HepG2 (cell line): ENCODE measurements at regions of chr5 and their contacts with region 1.

Region 1: DNA sequence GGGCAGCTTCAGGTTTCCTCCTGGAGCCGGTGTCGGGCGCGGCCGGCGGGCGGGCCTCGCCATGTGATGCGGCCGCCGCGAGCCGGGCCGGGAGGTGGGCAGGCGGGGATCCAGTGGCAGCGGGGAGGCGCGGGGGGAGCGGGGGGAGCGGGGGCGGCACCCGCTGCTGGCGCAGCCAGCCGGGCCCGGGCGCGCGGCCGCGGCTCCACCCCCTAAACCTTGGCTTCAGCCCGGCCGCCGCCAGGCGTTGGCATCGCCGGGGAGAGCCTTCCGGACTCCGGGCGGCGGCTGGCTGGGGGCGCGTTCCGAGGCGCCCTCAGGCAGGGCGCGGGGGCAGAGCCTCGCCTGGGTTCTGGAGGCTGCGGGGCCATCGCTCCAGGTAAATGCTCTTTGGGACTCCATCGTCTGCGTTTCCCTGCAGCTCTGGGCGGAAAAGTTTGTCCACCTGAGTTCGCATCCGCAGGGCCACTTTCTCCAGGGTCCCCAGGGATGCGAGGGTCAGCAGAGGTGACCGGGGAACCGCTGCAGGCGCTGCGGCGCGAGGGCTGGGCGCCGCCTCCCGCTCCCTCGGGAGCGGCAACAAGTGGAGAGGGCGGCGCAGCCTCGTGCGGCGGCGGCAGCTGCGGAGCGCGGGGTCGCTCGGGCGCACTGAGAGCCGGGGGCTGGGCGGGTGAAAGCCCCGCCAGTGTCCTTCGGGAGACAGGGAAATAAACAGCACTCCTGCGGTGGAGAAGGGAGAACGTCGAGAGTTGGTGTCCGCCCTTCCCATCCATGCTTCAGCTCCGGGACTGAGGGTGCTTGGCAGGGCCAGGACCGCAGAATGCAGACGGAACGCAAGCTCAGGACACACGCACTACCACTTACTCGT is at the start of gene ARHGEF28:
- DNase-seq: peak; percentile 49
- ATAC-seq: peak; percentile 78
- H3K4me3 ChIP-seq: peak within 1 kb of the TSS; percentile 79 to 90 (median 80)
- H3K27ac ChIP-seq: peak within 1 kb of the TSS; percentile 81
- H3K4me1 ChIP-seq: peaks cover 77% of the 10 kb centered on the region
- H3K27me3 ChIP-seq: no peaks in the 10 kb centered on the region; a peak in 1 of 5 replicates
- CTCF ChIP-seq: peak; percentile 23; the same call in 1 of the 2 replicates
- EP300 ChIP-seq: no peak
- POLR2A ChIP-seq: peak; percentile 54 to 75; a peak in 3 of 4 replicates
- RAD21 ChIP-seq: 0 out of 2 replicates have a peak, but pooled peaks have one; percentile 49
- total RNA-seq, gene ARHGEF28: 34.1 and 36.7 TPM in 2 replicates

Region 2: DNA sequence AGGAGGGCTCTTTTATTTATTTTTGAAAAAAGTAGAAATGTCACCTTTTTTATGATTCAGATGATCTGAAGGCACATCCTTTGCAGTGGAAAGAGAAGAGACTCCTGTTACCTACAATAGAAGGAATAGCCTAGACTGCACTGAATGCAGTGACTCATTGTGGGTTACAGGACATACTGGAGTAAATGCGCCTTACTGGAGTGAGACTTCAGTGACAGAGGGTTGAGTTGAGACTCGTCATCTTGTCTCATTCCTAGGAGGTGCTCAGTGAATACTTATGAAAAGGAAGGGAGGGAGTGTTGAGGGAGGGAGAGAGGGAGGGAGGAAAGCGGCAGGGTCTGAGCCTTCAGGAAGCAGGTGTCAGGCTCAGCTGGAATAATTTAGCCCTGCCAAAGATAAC is 86.0 kb before region 1 on chr5:
- CTCF ChIA-PET with region 1: no interaction called
- POLR2A ChIA-PET with region 1: interaction called, 20 read pairs
- in situ Hi-C with region 1: no loop called
- intact Hi-C with region 1: no loop called
- DNase-seq: peak; percentile 50
- ATAC-seq: no peak
- H3K4me3 ChIP-seq: no peak overlapping the region
- H3K27ac ChIP-seq: no peak overlapping the region
- H3K4me1 ChIP-seq: peaks cover 67% of the 10 kb centered on the region
- H3K27me3 ChIP-seq: no peaks in the 10 kb centered on the region
- CTCF ChIP-seq: no peak
- EP300 ChIP-seq: no peak
- POLR2A ChIP-seq: no peak
- RAD21 ChIP-seq: no peak

Region 3: DNA sequence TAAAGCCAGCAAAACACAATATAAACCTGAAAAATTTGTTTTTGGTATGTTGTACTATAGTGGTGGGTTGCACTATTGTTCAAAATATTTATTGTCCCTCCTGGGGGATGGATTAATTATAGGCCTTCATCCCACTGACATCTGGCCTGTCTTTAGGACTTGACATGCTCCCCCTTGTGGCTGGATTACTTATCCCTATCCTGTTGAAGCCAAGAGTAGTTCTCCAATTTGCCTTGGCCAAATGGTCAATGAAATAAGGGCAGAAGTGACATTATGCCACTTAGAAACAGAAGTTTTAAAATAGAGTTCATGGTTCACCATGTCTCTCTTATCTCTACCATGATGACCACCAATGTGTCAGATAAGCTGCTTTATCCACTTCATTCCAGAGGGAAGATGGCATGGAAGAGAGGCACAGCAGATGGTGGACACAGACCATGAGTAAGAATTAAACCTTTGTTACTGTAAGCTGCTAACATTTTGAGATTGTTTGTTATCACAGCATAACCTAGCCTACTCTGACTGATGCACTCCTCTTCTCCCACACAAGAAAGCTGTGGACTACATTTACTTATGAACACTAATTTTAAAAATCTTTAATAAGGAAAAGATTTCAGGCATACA is 29.4 kb before region 1 on chr5:
- CTCF ChIA-PET with region 1: no interaction called
- POLR2A ChIA-PET with region 1: interaction called, 11 read pairs
- in situ Hi-C with region 1: no loop called
- intact Hi-C with region 1: loop called (anchors 1 kb)
- DNase-seq: peak; percentile 60
- ATAC-seq: peak; percentile 79
- H3K4me3 ChIP-seq: no peak overlapping the region
- H3K27ac ChIP-seq: no peak overlapping the region
- H3K4me1 ChIP-seq: no peaks in the 10 kb centered on the region
- H3K27me3 ChIP-seq: no peaks in the 10 kb centered on the region
- CTCF ChIP-seq: peak; percentile 63
- EP300 ChIP-seq: no peak
- POLR2A ChIP-seq: no peak
- RAD21 ChIP-seq: no peak

Region 4: DNA sequence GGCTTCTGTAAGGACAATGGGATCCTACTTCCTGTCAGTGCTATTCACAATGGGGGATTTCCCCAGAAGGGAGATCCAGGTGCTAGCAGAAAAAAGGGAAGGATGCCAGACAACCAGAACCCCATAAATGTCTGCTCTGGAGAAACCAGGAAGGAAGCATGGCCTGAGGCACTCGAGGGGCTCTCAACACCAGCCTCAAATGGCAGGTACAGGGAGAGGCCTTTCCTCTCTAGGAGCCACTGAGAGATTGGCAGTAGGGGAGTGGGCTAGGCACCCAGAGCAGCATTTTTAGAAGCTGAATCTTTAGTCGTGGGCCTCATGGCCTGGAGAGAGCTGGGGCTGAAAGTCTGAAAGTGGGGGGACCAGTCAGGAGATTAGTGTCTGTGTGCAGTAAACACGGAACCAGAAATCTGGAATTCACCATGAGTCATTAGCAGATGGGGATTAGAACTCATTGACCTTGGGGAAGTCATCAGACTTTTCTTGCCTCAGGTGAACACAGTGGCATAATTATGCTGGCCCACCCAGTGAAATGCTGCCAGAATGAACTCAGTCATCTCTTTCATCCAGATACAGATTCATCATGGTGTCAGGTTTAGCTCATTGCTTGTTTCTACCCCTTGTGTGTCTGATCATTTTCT is 28.1 kb after region 1 on chr5:
- CTCF ChIA-PET with region 1: no interaction called
- POLR2A ChIA-PET with region 1: interaction called, 20 read pairs
- in situ Hi-C with region 1: no loop called
- intact Hi-C with region 1: no loop called
- DNase-seq: peak; percentile 47
- ATAC-seq: peak; percentile 64
- H3K4me3 ChIP-seq: peak overlapping the region in 1 of 3 experiments; percentile 17; a peak in 1 of 6 replicates
- H3K27ac ChIP-seq: peak overlapping the region; percentile 68
- H3K4me1 ChIP-seq: peaks cover 60% of the 10 kb centered on the region
- H3K27me3 ChIP-seq: no peaks in the 10 kb centered on the region
- CTCF ChIP-seq: no peak
- EP300 ChIP-seq: no peak
- POLR2A ChIP-seq: no peak
- RAD21 ChIP-seq: no peak

Region 5: DNA sequence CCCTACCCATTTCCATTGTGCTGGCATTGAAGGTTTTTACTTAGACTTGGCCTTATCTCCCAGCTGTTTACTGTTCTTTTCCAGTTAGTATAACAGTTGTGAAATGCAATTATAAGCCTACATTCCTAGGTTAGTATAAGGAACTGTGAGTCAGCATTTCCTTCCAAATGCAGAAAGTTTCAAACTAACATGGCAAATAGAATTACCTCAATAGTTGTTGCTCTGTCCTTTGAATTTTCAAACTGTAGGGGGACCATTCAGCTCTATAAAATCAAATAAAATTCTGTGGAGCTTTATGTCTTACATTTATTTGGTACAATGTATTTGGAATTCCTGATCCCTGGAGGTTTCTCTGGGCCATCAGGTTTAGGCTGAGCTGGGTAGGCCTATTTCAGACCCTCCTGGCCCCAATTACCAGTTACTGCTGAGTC is 47.0 kb after region 1 on chr5:
- CTCF ChIA-PET with region 1: no interaction called
- POLR2A ChIA-PET with region 1: interaction called, 21 read pairs
- in situ Hi-C with region 1: no loop called
- intact Hi-C with region 1: loop called (anchors 1 kb)
- DNase-seq: peak; percentile 67
- ATAC-seq: peak; percentile 70
- H3K4me3 ChIP-seq: no peak overlapping the region
- H3K27ac ChIP-seq: peak overlapping the region; percentile 65
- H3K4me1 ChIP-seq: peaks cover 58% of the 10 kb centered on the region
- H3K27me3 ChIP-seq: no peaks in the 10 kb centered on the region
- CTCF ChIP-seq: no peak
- EP300 ChIP-seq: peak in 1 of 2 experiments; percentile 68; a peak in 1 of 4 replicates
- POLR2A ChIP-seq: no peak
- RAD21 ChIP-seq: no peak

Region 6: DNA sequence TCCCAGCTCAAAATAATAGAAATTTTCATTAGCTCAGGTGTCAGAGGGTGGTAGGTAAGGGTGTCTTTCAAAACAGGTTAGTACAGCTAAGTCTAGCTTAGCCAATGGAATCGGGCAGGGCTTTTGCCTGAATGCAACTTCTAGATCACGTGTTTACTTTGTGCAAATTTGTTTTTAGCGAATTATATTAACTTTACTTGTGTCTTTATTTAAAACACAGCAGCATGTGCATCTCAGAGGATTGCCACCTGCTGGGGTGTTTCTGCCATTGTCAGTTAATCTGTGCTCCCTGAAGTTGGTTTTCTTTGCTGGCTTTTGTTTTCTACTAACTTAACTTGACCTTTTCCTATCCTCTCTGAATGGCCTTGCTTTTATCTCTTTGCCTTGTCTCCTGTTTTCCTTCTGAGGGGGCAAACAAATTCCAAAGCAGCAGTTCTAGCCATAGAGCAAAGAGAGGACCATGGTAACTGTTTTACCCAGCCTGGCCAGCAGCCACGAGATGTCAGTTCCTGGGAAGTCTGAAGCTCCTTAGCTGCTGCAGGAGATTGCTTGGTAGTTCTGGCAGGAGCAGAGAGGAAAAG is 67.4 kb after region 1 on chr5:
- CTCF ChIA-PET with region 1: no interaction called
- POLR2A ChIA-PET with region 1: interaction called, 16 read pairs
- in situ Hi-C with region 1: no loop called
- intact Hi-C with region 1: loop called (anchors 5 kb)
- DNase-seq: peak; percentile 56
- ATAC-seq: peak; percentile 87
- H3K4me3 ChIP-seq: no peak overlapping the region
- H3K27ac ChIP-seq: peak overlapping the region; percentile 43
- H3K4me1 ChIP-seq: peaks cover 33% of the 10 kb centered on the region
- H3K27me3 ChIP-seq: no peaks in the 10 kb centered on the region
- CTCF ChIP-seq: peak; percentile 68
- EP300 ChIP-seq: no peak
- POLR2A ChIP-seq: no peak
- RAD21 ChIP-seq: peak; percentile 61; the same call in 1 of the 2 replicates

Region 7: DNA sequence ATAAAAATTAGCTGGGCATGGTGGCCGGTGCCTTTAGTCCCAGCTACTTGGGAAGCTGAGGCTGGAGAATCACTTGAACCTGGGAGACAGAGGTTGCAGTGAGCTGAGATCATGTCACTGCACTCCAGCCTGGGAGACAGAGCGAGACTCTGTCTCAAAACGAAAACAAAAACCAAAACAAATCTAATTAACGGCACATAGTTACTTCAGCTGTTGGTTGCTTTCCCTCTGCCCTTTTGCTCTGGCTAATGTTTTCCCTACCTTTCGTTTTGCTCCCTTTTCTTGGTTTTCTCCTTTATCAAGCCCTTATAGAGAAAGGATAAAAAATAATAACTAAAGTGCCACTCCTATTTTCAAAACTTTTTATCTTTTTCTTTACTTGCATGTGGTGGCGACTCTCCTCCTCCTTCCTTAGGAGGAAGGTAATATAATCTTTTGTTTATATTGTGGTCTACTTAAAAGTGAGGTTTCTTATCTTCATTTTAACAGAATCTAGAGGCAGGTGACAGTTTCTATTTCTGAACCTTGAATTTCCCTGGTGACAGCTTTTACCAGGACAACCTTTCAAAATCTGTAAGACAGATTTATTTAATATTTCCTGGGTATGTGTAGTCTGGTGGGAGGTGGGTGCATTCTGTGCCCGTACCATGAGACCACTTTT is 125.2 kb after region 1 on chr5:
- CTCF ChIA-PET with region 1: no interaction called
- POLR2A ChIA-PET with region 1: no interaction called
- in situ Hi-C with region 1: no loop called
- intact Hi-C with region 1: no loop called
- DNase-seq: no peak
- ATAC-seq: no peak
- H3K4me3 ChIP-seq: no peak overlapping the region
- H3K27ac ChIP-seq: no peak overlapping the region
- H3K4me1 ChIP-seq: peaks cover 23% of the 10 kb centered on the region
- H3K27me3 ChIP-seq: no peaks in the 10 kb centered on the region
- CTCF ChIP-seq: no peak
- EP300 ChIP-seq: no peak
- POLR2A ChIP-seq: no peak
- RAD21 ChIP-seq: no peak

Region 8: DNA sequence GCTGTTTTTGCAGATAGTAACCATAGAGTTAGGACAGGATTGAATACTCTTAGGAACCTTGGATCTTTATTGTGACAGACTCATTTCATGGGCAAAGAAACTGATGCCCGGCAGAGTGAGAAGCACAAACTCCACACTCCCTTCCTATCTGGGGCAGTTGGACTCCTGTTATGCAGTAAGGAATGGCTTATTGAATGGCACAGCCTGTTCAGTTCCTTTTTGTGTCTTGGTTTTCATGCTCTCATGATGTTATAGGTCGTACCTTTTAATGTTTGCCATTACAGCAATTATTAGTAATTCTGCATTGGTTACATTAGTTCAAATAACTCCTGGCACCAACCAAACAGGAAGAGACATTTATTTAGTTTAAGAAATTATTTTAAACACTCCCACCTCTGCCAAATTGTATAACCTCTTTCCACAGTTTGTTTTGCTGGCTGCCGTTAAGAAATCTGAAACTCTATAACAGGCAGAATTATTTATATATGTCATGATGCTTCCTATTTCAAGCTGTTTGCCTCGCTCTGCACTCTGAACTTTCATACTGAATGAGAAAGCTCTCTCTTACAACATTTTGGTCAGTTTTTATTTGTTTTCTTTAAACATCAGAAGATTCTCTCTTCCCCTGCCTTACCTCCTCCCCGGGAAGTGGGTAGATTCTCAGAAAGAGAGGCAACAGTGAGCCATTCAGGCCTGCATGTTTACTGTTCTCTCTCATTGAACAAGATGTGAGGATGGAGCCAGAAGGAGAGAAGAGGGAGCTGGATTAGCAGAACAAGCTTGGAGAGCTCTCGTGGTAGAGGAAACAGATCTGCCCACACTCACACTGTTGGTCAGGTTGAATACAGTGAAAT is 144.2 kb after region 1 on chr5:
- CTCF ChIA-PET with region 1: no interaction called
- POLR2A ChIA-PET with region 1: interaction called, 11 read pairs
- in situ Hi-C with region 1: no loop called
- intact Hi-C with region 1: no loop called
- DNase-seq: peak; percentile 77
- ATAC-seq: peak; percentile 81
- H3K4me3 ChIP-seq: no peak overlapping the region
- H3K27ac ChIP-seq: peak overlapping the region; percentile 56
- H3K4me1 ChIP-seq: peaks cover 35% of the 10 kb centered on the region
- H3K27me3 ChIP-seq: no peaks in the 10 kb centered on the region
- CTCF ChIP-seq: no peak
- EP300 ChIP-seq: peak in 1 of 2 experiments; percentile 53; a peak in 1 of 4 replicates
- POLR2A ChIP-seq: no peak
- RAD21 ChIP-seq: no peak